ENCODE measurements at regions of chr19 and their contacts with region 1.

Region 1: DNA sequence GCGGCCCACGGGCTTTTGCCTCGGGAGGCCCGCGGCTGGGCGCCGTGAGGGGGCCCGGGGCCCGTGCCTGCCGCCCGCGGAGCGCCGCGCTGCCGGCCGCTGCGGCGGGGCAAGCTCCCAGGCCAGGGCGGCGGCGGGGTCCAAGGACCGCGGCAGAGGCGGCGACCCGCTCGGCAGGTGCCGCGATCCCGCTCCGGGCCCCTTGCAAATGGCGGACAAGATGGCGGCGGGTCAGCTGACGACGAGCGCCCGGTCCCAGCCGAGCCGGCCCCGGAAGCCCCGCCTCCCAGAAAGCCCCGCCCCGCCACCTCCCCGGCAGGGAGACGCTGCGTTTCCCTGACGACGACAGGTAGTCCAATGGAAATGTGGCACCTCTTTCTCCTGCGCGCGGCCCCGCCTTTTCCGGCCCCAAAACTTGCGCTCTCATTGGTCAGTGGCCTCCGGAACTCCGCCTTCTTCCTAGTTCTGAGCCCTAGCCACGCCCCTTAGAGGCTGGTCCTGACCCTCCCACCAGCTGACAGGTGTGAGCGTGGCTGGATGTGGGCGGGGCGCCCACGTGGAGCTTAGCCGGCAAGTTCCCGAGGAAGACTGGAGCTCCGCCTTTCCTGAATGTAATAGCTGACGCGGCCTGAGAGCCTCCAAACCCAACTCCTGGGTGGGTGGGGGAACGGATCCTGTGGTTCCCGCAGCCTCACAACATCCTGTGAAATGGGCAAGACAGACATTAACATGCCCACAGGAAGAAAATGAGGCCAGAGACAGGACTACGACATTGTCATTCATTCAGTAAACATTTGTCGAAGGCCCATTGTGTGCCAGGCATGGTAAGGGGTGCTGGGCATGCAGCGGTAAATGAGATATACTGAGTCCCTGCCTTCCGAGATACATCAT is at the start of gene AP3D1:
- DNase-seq: peak; percentile 100
- H3K4me3 Mint-ChIP-seq: peak within 1 kb of the TSS; percentile 83
- H3K27ac Mint-ChIP-seq: peak within 1 kb of the TSS; percentile 94
- H3K4me1 Mint-ChIP-seq: peaks cover 40% of the 10 kb centered on the region
- H3K27me3 Mint-ChIP-seq: peaks cover 1% of the 10 kb centered on the region
- total RNA-seq, gene AP3D1: 120 and 124 TPM in 2 replicates

Region 2: DNA sequence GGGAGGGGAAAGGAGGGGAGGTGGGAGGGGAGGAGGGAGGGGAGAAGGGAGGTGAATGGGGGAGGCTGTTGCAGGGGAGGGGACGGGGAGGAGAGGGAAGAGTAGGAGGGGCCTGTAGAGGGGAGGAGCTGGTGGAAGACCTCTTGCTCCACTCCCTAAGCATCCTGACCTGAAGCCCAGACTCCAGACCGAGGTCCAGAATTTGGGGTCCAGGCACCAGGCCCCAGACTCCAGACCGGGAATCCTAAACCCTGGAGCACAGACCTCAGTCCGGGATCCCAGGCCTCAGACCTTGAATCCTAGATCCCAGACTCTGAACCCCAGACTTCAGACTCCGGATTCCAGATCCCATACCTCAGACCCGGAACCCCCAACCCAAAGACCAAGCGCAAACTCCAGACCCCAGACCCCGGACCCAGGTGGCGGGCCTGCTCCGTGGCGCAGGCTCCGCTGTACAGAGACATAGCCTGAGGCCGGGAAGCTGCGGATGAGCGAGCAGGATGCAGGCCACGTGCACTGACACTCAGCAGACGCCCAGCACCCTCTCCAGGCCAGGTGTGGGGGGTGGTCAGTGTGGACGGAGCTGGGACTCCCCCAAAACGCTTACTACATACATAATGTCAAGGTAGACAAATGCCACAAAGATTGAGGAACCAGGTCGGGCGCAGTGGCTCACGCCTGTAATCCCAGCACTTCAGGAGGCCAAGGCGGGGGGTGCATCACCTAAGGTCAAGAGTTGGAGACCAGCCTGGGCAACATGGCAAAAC is 135.4 kb before region 1 on chr19:
- intact Hi-C with region 1: loop called (anchors 5 kb)
- DNase-seq: peak; percentile 44
- H3K4me3 Mint-ChIP-seq: peak overlapping the region; percentile 77
- H3K27ac Mint-ChIP-seq: peak overlapping the region; percentile 36
- H3K4me1 Mint-ChIP-seq: peaks cover 9% of the 10 kb centered on the region
- H3K27me3 Mint-ChIP-seq: no peaks in the 10 kb centered on the region

Region 3: DNA sequence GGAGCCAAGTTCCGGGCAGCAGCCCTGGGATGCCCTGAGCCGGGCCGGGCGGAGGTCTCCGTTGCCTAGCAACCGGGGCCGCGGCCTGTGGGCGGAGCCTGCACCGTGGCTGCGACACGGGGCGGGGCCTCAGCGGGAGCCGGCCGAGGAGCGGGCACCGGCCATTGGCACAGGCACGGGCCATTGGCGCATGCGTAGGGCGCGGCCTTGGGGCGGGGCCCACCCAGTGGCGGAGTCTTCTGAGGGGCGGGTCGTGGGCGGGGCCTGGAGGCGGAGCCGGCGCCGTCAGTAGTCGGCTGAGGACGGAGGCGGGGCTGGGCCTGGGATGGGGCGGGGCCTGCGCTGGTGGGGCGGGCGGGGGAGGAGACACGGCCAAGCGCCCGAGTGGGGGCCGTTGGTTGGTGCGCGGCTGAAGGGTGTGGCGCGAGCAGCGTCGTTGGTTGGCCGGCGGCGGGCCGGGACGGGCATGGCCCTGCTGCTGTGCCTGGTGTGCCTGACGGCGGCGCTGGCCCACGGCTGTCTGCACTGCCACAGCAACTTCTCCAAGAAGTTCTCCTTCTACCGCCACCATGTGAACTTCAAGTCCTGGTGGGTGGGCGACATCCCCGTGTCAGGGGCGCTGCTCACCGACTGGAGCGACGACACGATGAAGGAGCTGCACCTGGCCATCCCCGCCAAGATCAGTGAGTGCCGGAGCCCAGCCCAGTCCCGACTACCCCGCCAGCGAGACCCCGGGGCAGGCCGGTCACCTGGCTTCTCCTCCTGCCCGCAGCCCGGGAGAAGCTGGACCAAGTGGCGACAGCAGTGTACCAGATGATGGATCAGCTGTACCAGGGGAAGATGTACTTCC is 54.9 kb before region 1 on chr19 and contains the start of gene IZUMO4:
- intact Hi-C with region 1: loop called (anchors 1 kb)
- DNase-seq: peak; percentile 99
- H3K4me3 Mint-ChIP-seq: peak within 1 kb of the TSS; percentile 97
- H3K27ac Mint-ChIP-seq: peak within 1 kb of the TSS; percentile 91
- H3K4me1 Mint-ChIP-seq: peaks cover 23% of the 10 kb centered on the region
- H3K27me3 Mint-ChIP-seq: no peaks in the 10 kb centered on the region
- total RNA-seq, gene IZUMO4: 6.7 and 7.1 TPM in 2 replicates

Region 4: DNA sequence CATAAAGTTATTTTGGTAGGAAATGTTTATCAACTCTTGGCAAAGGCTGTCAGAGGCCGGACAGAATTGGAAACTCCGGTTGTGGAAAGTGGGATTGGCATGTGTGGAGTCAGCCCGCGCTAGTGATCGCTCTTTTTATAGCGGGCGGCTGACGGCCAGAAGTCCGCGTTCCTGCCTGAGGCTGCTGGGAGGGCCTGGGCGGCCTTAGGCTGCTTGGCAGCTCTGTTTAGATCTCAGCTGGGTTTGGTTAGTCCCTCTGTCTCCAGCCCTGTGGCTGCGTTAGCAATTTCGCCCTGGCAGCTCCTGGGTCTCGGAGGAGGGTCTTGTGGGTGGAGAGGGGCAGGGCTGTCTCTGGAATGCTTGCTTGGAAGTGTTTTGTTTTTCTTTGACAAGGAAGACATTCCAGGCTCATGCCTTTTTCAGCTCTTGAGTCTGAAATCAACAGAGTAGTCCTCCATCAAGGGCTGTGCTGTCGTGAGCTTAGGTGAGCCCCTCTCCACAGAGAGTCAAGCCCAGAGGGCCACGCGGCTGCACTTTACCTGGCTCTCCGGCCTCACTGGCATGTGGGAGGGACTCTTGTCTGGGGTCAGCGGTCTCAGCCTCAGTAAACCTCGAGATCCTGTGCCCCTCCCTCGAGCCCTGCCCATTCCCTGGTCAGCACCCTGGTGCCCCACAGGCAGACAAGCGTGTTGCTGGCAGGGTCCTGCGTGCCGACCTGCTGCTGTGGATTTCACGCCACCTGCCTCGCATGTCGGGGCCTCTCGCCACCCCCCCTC is 34.7 kb after region 1 on chr19:
- intact Hi-C with region 1: no loop called
- DNase-seq: no peak
- H3K4me3 Mint-ChIP-seq: no peak overlapping the region
- H3K27ac Mint-ChIP-seq: no peak overlapping the region
- H3K4me1 Mint-ChIP-seq: peaks cover 9% of the 10 kb centered on the region
- H3K27me3 Mint-ChIP-seq: no peaks in the 10 kb centered on the region

Region 5: DNA sequence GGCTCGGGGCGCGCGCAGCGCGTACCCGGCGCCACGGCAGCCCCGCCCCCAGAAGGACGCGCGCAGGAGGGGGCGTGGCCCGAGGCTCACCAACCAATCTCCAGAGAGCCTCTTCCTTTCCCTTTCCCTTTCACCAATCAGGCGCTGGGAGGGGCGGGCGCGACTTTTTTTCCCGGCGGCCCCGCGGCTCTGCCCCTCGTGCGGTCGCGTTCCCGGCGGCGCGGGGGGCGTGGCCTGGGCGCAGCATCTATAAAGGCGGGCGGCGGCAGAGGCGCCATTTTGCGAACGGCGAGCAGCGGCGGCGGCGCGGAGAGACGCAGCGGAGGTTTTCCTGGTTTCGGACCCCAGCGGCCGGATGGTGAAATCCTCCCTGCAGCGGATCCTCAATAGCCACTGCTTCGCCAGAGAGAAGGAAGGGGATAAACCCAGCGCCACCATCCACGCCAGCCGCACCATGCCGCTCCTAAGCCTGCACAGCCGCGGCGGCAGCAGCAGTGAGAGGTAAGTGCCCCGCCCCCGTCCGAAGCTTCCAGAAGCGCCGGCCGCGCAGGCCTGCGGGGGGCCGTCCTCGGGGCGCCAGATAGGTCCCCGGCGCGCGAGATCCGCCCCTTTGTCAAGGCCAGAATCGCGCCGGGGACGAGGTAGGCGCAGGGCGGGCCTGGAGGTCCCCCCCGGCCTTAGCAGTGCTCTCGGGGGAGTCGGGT is 117.8 kb after region 1 on chr19:
- intact Hi-C with region 1: loop called (anchors 1 kb)
- DNase-seq: peak; percentile 99
- H3K4me3 Mint-ChIP-seq: peak overlapping the region; percentile 91
- H3K27ac Mint-ChIP-seq: peak overlapping the region; percentile 88
- H3K4me1 Mint-ChIP-seq: peaks cover 23% of the 10 kb centered on the region
- H3K27me3 Mint-ChIP-seq: peaks cover 5% of the 10 kb centered on the region

Region 6: DNA sequence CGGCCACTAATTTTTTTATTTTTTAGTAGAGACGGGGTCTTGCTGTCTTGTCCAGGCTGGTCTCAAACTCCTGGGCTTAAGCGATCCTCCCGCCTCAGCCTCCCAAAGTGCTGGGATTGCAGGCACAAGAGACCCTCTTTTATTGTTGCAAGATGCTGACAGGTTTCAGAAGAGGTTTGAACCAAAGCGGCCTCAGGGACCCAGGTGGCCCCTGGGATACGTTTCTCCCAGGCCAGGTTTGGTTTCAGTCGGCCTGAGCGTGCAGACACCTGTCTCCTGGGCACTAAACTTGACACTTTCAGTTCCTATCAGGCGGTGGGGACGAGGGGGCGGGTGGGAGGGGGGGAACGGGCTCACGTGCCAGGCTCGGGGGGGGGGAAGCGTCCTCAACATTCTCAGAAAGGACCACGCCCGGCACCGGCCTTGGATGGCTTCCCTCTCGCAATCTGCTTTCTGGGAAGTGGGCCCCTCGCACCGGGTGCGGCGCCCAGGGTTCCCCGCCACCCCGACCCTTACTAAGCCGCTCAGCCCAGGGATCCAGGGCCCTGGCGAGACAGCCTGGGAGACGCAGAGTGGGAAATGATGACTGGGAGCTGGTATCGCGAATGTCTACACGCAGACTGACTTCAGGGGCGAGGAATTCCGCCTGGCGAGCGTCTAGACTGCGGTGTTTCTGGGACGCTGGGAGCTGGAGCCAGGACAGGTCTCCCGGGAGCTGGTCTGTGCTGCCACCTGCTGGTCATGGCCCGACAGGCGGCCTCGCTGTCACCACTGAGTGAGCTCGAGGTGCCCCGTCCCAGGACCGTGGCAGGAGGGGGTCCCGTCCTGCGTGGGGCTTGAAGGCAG is 459.3 kb after region 1 on chr19:
- intact Hi-C with region 1: loop called (anchors 10 kb)
- DNase-seq: peak; percentile 79
- H3K4me3 Mint-ChIP-seq: peak overlapping the region; percentile 85
- H3K27ac Mint-ChIP-seq: peak overlapping the region; percentile 75
- H3K4me1 Mint-ChIP-seq: peaks cover 39% of the 10 kb centered on the region
- H3K27me3 Mint-ChIP-seq: peaks cover 12% of the 10 kb centered on the region